BJ (cell line): ENCODE measurements at regions of chr1 and their contacts with region 1.

Region 1: GRCh38 chr1:31789259-31790065 is 25.3 kb upstream of the ADGRB2 start:
- DNase-seq: peak; percentile 37
- H3K4me3 ChIP-seq: peak overlapping the region; percentile 55
- H3K27me3 ChIP-seq: no peaks in the 10 kb centered on the region
- CTCF ChIP-seq: peak; percentile 99

Region 2: GRCh38 chr1:31564134-31564989 is 225.1 kb before region 1 on chr1:
- CTCF ChIA-PET with region 1: interaction called, 27 read pairs
- POLR2A ChIA-PET with region 1: no interaction called
- DNase-seq: no peak
- H3K4me3 ChIP-seq: no peak overlapping the region
- H3K27me3 ChIP-seq: peaks cover 1% of the 10 kb centered on the region; the same call in 1 of the 2 replicates
- CTCF ChIP-seq: peak; percentile 80

Region 3: GRCh38 chr1:31663622-31664452 is 125.6 kb before region 1 on chr1:
- CTCF ChIA-PET with region 1: interaction called, 46 read pairs
- POLR2A ChIA-PET with region 1: interaction called, 4 read pairs
- DNase-seq: no peak
- H3K4me3 ChIP-seq: no peak overlapping the region
- H3K27me3 ChIP-seq: no peaks in the 10 kb centered on the region
- CTCF ChIP-seq: peak; percentile 85

Region 4: GRCh38 chr1:31694069-31694963 is 95.1 kb before region 1 on chr1:
- CTCF ChIA-PET with region 1: no interaction called
- POLR2A ChIA-PET with region 1: no interaction called
- DNase-seq: no peak
- H3K4me3 ChIP-seq: no peak overlapping the region
- H3K27me3 ChIP-seq: no peaks in the 10 kb centered on the region
- CTCF ChIP-seq: no peak

Region 5: GRCh38 chr1:31715087-31715872 is 74.2 kb before region 1 on chr1:
- CTCF ChIA-PET with region 1: interaction called, 17 read pairs
- POLR2A ChIA-PET with region 1: no interaction called
- DNase-seq: peak; percentile 77
- H3K4me3 ChIP-seq: peak overlapping the region; percentile 33
- H3K27me3 ChIP-seq: peaks cover 2% of the 10 kb centered on the region
- CTCF ChIP-seq: peak; percentile 95

Region 6: GRCh38 chr1:31762726-31763670 is 26.5 kb before region 1 on chr1:
- CTCF ChIA-PET with region 1: interaction called, 53 read pairs
- POLR2A ChIA-PET with region 1: no interaction called
- DNase-seq: no peak
- H3K4me3 ChIP-seq: peak overlapping the region; percentile 57
- H3K27me3 ChIP-seq: peaks cover 2% of the 10 kb centered on the region; the same call in 1 of the 2 replicates
- CTCF ChIP-seq: peak; percentile 60

Region 7: GRCh38 chr1:31815752-31816500 is 26.5 kb after region 1 on chr1 and contains the start of gene SPOCD1:
- CTCF ChIA-PET with region 1: interaction called, 10 read pairs
- POLR2A ChIA-PET with region 1: no interaction called
- DNase-seq: no peak
- H3K4me3 ChIP-seq: peak within 1 kb of the TSS; percentile 21
- H3K27me3 ChIP-seq: no peaks in the 10 kb centered on the region
- CTCF ChIP-seq: peak; percentile 94
- polyA plus RNA-seq, gene SPOCD1: 92.8 and 169 TPM in 2 replicates

Region 8: GRCh38 chr1:32107742-32108661 is 318.5 kb after region 1 on chr1 and contains the start of gene KPNA6:
- CTCF ChIA-PET with region 1: no interaction called
- POLR2A ChIA-PET with region 1: no interaction called
- DNase-seq: peak; percentile 72
- H3K4me3 ChIP-seq: peak within 1 kb of the TSS; percentile 90
- H3K27me3 ChIP-seq: no peaks in the 10 kb centered on the region
- CTCF ChIP-seq: no peak
- polyA plus RNA-seq, gene KPNA6: 26.6 and 29.8 TPM in 2 replicates